KBM-7 (cell line): ENCODE measurements at regions of chr21 and their contacts with region 1.

Region 1: DNA sequence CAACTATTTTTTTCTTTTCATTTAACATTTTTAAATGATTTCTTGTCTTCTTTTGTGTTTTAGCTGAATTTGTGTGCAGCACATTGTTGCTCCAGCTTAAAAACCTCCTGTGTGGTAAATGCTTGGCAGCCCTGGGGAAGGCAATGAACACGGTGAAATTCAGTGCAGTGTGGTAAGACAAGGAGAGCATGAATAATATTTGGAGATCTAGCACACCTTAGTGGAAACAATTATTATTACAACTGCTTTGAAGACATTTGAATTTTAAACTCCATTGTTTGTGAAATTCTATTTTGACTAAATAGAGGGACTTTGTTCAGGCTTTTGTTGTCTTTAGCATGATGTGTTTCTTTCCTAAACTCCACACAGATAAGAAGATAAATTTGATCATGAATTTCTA is 242.6 kb upstream of the CXADR start:
- DNase-seq: peak; percentile 42

Region 2: GRCh38 chr21:17371450-17371849 is 101.2 kb after region 1 on chr21:
- in situ Hi-C with region 1: loop called (anchors 25 kb)
- DNase-seq: no peak